AG04449 (cell line): ENCODE measurements at regions of chrX and their contacts with region 1.

Region 1: GRCh38 chrX:109714340-109714958 is 18.6 kb downstream of the ACSL4 start:
- DNase-seq: peak; percentile 51
- H3K4me3 ChIP-seq: no peak overlapping the region
- CTCF ChIP-seq: no peak

Region 2: DNA sequence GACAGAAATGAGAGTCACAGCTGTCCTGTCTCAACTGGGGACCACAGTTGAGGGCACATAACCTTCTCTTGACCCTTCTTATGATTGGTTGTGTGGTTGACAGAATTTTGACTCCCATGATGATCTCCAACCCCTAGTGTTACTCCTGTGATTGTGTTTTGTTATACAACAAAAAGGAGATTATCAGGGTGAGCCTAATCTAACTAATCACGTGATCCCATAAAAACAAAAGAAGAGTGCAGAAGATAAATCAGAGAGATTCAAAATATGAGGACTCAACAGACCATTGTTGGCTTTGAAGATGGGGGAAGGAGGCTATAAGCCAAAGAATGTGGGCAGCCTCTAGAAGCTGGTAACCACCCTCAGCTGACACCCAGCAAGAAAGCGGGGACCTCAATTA is 305.3 kb before region 1 on chrX:
- CTCF ChIA-PET with region 1: no interaction called
- POLR2A ChIA-PET with region 1: no interaction called
- DNase-seq: no peak
- H3K4me3 ChIP-seq: no peak overlapping the region
- CTCF ChIP-seq: no peak

Region 3: DNA sequence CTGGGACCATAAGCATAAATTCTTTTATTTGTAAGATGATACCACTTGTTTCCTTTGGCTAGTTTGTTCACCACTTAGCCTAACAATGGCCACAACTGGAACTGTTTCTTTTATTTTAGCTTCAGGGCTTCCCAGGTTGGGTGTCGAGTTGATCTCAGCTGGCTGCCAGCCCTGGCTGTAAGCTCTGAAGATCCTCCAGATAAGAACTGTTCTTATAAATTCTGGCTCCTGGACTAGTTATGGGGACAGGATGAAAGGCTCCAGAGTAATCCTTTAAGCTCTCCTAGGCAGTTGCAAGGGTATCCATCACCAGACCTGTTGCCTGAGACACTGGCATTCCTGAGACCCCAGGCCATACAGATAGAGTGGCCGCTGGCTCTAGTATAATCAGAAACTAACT is 148.0 kb after region 1 on chrX:
- CTCF ChIA-PET with region 1: interaction called, 158 read pairs
- POLR2A ChIA-PET with region 1: no interaction called
- DNase-seq: no peak
- H3K4me3 ChIP-seq: no peak overlapping the region
- CTCF ChIP-seq: no peak

Region 4: DNA sequence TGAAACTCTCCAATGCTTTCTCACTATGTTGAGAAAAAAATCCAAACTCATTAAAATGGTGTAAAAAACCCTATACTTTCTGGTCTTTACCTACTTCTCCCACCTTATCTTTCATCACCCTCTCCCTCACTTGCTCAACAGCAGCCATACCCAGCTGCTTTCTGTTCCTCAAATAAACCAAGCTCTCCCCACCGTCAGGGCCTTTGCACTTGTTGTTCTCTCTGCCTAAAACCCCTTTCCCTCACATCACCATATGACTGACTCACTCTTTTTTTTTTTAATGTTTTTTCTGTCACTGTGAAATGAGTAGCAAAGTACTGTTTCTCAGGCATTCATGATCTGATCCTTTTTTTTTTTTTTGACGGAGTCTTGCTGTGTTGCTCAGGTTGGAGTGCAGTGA is 166.2 kb after region 1 on chrX:
- CTCF ChIA-PET with region 1: interaction called, 64 read pairs
- POLR2A ChIA-PET with region 1: no interaction called
- DNase-seq: no peak
- H3K4me3 ChIP-seq: no peak overlapping the region
- CTCF ChIP-seq: no peak